Activated naive CD4-positive, alpha-beta T cell treated with anti-CD3 and anti-CD28 coated beads for 36 hours (primary cell): ENCODE measurements at regions of chr3 and their contacts with region 1.

Region 1: GRCh38 chr3:33440323-33441232 is at the start of gene UBP1:
- DNase-seq: peak; percentile 99
- H3K4me3 Mint-ChIP-seq: peak within 1 kb of the TSS; percentile 99
- H3K27ac Mint-ChIP-seq: peak within 1 kb of the TSS; percentile 100
- H3K4me1 Mint-ChIP-seq: peaks cover 34% of the 10 kb centered on the region
- H3K27me3 Mint-ChIP-seq: no peaks in the 10 kb centered on the region
- total RNA-seq, gene UBP1: 42.8 to 44.0 TPM

Region 2: DNA sequence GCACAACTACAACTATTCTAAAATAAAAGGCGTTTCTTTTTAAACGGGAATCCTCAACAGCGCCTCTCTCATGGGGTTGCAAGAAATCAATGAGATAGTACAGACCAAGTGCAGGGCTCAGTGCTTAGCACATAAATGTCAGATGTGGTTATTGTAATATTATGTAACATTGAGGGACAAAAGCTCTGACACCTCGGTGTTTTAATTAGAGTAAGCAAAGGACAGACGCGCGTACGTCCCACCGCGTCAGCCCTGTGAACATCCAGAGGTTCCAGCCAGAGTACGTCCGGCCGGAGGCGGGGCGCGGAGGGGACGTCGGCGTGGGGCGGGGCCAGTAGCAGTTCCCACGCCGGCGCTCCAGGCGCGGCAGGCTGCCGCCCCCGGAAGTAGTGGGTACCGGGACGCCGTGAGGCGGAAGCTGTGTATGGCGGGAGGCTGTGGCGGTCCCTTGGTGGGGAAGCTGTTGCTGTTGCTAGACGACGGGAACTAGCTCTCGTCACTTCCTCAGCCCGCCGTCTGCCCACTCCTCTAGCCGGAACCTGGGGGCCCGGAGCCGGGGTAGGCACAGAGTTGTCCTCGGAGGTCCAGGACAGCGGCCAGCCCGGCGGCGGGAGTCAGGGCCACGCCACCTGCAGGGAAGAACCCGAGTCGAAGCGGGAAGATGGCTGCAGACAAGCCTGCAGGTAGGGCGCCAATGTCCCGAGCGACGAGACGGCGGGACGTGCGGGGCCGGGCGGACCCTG is 755.6 kb before region 1 on chr3 and contains the start of gene CNOT10:
- CTCF ChIA-PET with region 1: no interaction called
- intact Hi-C with region 1: loop called (anchors 1 kb)
- DNase-seq: peak; percentile 97
- H3K4me3 Mint-ChIP-seq: peak within 1 kb of the TSS; percentile 90
- H3K27ac Mint-ChIP-seq: peak within 1 kb of the TSS; percentile 86
- H3K4me1 Mint-ChIP-seq: peaks cover 32% of the 10 kb centered on the region
- H3K27me3 Mint-ChIP-seq: no peaks in the 10 kb centered on the region
- total RNA-seq, gene CNOT10: 40.6 to 46.5 TPM

Region 3: DNA sequence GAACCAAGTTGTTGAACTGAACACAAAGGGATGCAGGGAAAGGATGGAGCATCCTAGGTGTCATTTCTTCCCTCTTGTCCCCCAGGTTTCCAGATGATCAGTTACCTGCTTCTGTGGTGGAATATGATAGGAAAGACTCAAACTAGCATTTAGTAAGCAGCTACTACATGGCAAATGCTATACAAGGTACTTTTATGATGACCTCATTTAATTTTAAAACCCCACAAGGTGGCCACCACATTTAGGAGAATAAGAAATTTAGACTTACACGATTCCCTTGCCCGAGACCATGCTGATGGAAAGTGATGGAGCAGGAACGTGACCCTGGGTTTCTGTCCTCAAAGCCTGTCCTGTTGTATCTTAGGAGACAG is 448.3 kb before region 1 on chr3:
- CTCF ChIA-PET with region 1: no interaction called
- intact Hi-C with region 1: loop called (anchors 1 kb)
- DNase-seq: no peak
- H3K4me3 Mint-ChIP-seq: peak overlapping the region; percentile 31
- H3K27ac Mint-ChIP-seq: peak overlapping the region; percentile 84
- H3K4me1 Mint-ChIP-seq: peaks cover 54% of the 10 kb centered on the region
- H3K27me3 Mint-ChIP-seq: peaks cover 2% of the 10 kb centered on the region

Region 4: DNA sequence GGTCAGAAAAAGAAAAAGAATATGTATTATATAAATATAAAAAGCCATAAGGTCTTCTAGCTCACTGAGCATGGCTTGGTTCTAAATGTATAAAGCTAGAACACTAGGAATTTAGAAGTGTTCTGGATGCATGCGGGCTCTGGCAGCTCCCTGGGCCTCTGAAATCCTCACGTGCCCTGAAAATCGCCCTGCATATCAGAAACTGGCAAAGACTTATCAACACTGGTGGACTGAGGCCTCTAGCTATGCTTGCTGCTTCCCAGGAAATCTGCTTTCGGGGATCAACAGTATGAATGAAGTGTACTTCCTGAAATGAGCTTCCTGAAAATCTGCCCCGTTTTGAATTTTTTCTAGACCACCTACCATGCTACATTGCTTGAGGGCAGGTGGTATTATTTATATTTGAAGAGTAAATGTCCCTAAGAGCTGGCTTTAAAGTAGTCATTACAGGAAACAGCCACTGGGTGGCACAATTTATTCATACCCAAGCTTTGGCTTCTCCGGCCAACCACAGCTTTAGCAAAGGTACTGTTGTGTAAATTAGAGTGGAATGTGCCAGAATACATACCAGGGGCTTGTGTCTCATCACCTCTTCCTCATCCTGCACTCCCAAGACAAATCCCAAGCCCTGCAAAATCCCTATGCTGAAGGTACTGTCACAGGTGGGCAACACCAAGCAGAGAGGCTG is 309.1 kb before region 1 on chr3:
- CTCF ChIA-PET with region 1: interaction called, 7 read pairs
- intact Hi-C with region 1: loop called (anchors 5 kb)
- DNase-seq: peak; percentile 50
- H3K4me3 Mint-ChIP-seq: no peak overlapping the region
- H3K27ac Mint-ChIP-seq: no peak overlapping the region
- H3K4me1 Mint-ChIP-seq: peaks cover 4% of the 10 kb centered on the region
- H3K27me3 Mint-ChIP-seq: no peaks in the 10 kb centered on the region

Region 5: DNA sequence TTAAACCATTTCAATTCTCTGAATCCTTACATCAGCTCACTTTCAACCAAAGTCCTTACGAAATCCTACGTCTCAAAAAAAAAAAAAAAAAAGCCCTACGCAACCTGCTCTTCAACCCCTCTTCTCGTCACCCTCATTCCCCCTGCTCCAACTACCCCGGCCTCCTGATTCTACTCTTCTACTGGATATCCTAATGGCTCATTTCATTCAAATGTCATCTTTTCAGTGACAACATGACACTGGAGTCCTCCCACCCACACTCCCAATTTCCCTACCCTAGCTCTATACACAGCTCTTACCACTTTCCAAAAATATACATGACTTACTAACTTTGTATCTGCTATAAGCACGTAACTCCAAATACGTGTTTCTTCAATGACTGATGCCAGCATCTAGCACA is 11.8 kb before region 1 on chr3:
- CTCF ChIA-PET with region 1: no interaction called
- intact Hi-C with region 1: loop called (anchors 1 kb)
- DNase-seq: no peak
- H3K4me3 Mint-ChIP-seq: no peak overlapping the region
- H3K27ac Mint-ChIP-seq: peak overlapping the region; percentile 46
- H3K4me1 Mint-ChIP-seq: peaks cover 72% of the 10 kb centered on the region
- H3K27me3 Mint-ChIP-seq: no peaks in the 10 kb centered on the region

Region 6: GRCh38 chr3:33798411-33799201 is 358.0 kb after region 1 on chr3 and contains the start of gene PDCD6IP:
- CTCF ChIA-PET with region 1: no interaction called
- intact Hi-C with region 1: loop called (anchors 1 kb)
- DNase-seq: peak; percentile 88
- H3K4me3 Mint-ChIP-seq: peak within 1 kb of the TSS; percentile 95
- H3K27ac Mint-ChIP-seq: peak within 1 kb of the TSS; percentile 83
- H3K4me1 Mint-ChIP-seq: peaks cover 56% of the 10 kb centered on the region
- H3K27me3 Mint-ChIP-seq: no peaks in the 10 kb centered on the region
- total RNA-seq, gene PDCD6IP: 126 to 127 TPM